ENCODE measurements at regions of chr3 and their contacts with region 1.

Region 1: DNA sequence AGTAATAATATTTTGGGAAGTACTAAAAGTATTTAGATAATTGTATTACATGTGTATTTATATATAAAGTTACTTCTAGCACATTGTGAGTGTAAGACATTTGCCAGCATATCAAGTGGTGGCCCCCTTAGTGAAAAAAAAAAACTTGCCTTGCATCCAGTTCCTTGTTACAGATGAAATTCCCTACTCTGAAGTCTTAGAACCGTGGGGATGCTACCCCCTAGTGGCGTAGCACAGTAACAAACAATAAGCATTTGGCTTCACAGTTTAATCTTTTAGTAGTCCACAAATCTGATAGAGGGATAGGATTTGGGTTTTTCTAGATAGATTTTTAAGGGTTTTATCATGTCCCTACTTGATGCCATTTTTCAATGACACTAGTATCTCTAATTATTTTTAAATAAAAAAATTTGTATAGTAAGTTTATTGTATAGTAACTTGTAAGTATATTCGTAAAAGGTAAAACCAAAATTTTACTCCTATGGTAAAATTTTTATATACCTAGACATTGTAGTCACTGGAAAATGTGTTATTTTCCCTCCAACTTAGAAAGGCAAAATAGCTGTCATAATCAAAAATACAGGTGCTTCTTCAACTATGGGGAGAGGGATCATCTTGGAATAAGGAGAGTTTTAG is 14.3 kb downstream of the SMC4 start:
- DNase-seq: peak; percentile 45
- CTCF ChIP-seq: peak; percentile 70

Region 2: DNA sequence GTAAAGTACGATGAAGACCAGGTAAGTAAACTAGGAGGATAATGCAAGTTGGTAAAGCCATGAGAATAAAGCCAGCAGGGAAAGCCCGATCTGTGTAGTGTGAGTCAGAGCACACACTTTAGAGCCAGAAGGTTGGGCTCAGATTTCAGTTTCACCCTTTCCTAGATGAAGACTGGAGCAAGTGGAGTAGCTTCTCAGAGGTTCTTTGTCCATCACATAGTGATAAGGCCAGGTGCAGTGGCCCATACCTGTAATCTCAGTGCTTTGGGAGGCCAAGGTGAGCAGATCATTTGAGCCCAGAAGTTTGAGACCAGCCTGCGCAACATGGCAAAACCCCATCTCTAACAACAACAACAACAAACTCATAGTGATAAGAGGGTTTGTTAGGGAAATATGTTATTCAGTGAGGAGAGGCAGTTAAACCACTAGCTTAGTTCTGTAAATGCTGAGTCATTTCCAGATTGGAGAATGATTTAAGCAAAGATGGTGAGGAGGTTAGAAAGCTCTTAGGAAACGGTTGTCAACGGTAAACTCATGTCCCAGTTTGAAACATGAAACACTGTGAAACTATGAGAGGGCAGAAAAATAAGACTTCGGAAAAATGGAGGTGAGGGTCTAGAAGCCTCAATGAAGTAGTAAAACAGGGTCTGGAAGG is 386.1 kb before region 1 on chr3:
- CTCF ChIA-PET with region 1: interaction called, 19 read pairs
- POLR2A ChIA-PET with region 1: no interaction called
- DNase-seq: peak; percentile 53
- CTCF ChIP-seq: no peak

Region 3: GRCh38 chr3:160163229-160163878 is 250.4 kb before region 1 on chr3:
- CTCF ChIA-PET with region 1: interaction called, 53 read pairs
- POLR2A ChIA-PET with region 1: no interaction called
- DNase-seq: peak; percentile 27
- CTCF ChIP-seq: peak; percentile 39

Region 4: DNA sequence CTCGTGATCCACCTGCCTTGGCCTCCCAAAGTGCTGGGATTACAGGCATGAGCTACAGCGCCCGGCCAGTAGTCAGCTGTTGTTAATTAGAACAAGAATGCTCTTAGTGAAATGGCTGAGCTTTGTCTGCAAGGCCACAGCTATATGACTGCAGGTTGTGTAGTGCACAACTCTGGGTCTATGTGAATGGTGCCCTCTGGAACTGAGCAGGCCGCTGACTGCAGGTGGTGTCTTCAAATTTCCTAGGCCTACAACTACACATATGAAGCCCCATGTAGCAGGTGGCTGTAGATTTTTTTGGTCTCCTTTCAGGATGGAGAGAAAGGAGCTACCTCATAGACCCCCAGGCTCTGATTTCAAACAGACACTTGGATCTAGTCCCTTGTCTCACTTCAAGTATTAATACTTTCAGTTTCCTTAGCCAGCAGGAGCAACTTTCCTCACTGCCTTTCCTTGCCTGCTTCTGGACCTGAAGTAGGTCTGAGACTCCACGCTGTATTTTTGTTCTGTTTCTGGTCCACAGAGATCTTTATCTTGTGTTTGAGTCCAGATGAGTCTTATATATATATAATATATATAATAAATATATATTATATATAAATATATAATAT is 101.6 kb before region 1 on chr3:
- CTCF ChIA-PET with region 1: no interaction called
- POLR2A ChIA-PET with region 1: no interaction called
- DNase-seq: no peak
- CTCF ChIP-seq: no peak

Region 5: GRCh38 chr3:160400702-160401150 is 13.0 kb before region 1 on chr3:
- CTCF ChIA-PET with region 1: interaction called, 33 read pairs
- POLR2A ChIA-PET with region 1: no interaction called
- DNase-seq: peak; percentile 16
- CTCF ChIP-seq: no peak

Region 6: GRCh38 chr3:160435095-160435494 is 21.4 kb after region 1 on chr3:
- CTCF ChIA-PET with region 1: interaction called, 13 read pairs
- POLR2A ChIA-PET with region 1: no interaction called
- DNase-seq: no peak
- CTCF ChIP-seq: no peak